Activated CD4-positive, alpha-beta T cell treated with anti-CD3 and anti-CD28 coated beads, Interleukin-2, amount 10 ng/mL, durations not matched to agents 24 days and 14 days (primary cell): ENCODE measurements at regions of chr7 and their contacts with region 1.

Region 1: GRCh38 chr7:104983578-104984539 is 30.1 kb upstream of the KMT2E start:
- DNase-seq: peak; percentile 96
- H3K4me3 Mint-ChIP-seq: peak overlapping the region; percentile 98
- H3K27ac Mint-ChIP-seq: peak overlapping the region; percentile 100
- H3K4me1 Mint-ChIP-seq: peaks cover 53% of the 10 kb centered on the region
- H3K27me3 Mint-ChIP-seq: no peaks in the 10 kb centered on the region

Region 2: GRCh38 chr7:104923010-104923421 is 60.8 kb before region 1 on chr7:
- intact Hi-C with region 1: loop called (anchors 1 kb)
- DNase-seq: peak; percentile 93
- H3K4me3 Mint-ChIP-seq: no peak overlapping the region
- H3K27ac Mint-ChIP-seq: no peak overlapping the region
- H3K4me1 Mint-ChIP-seq: peaks cover 7% of the 10 kb centered on the region
- H3K27me3 Mint-ChIP-seq: peaks cover 4% of the 10 kb centered on the region

Region 3: GRCh38 chr7:105003275-105003674 is 19.4 kb after region 1 on chr7:
- intact Hi-C with region 1: loop called (anchors 2 kb)
- DNase-seq: peak; percentile 69
- H3K4me3 Mint-ChIP-seq: peak overlapping the region; percentile 76
- H3K27ac Mint-ChIP-seq: peak overlapping the region; percentile 87
- H3K4me1 Mint-ChIP-seq: peaks cover 53% of the 10 kb centered on the region
- H3K27me3 Mint-ChIP-seq: no peaks in the 10 kb centered on the region

Region 4: GRCh38 chr7:105046414-105046813 is 62.6 kb after region 1 on chr7:
- intact Hi-C with region 1: loop called (anchors 2 kb)
- DNase-seq: no peak
- H3K4me3 Mint-ChIP-seq: no peak overlapping the region
- H3K27ac Mint-ChIP-seq: no peak overlapping the region
- H3K4me1 Mint-ChIP-seq: peaks cover 26% of the 10 kb centered on the region
- H3K27me3 Mint-ChIP-seq: no peaks in the 10 kb centered on the region

Region 5: GRCh38 chr7:105098863-105099515 is 115.1 kb after region 1 on chr7:
- intact Hi-C with region 1: loop called (anchors 5 kb)
- DNase-seq: no peak
- H3K4me3 Mint-ChIP-seq: no peak overlapping the region
- H3K27ac Mint-ChIP-seq: peak overlapping the region; percentile 48
- H3K4me1 Mint-ChIP-seq: peaks cover 39% of the 10 kb centered on the region
- H3K27me3 Mint-ChIP-seq: no peaks in the 10 kb centered on the region

Region 6: DNA sequence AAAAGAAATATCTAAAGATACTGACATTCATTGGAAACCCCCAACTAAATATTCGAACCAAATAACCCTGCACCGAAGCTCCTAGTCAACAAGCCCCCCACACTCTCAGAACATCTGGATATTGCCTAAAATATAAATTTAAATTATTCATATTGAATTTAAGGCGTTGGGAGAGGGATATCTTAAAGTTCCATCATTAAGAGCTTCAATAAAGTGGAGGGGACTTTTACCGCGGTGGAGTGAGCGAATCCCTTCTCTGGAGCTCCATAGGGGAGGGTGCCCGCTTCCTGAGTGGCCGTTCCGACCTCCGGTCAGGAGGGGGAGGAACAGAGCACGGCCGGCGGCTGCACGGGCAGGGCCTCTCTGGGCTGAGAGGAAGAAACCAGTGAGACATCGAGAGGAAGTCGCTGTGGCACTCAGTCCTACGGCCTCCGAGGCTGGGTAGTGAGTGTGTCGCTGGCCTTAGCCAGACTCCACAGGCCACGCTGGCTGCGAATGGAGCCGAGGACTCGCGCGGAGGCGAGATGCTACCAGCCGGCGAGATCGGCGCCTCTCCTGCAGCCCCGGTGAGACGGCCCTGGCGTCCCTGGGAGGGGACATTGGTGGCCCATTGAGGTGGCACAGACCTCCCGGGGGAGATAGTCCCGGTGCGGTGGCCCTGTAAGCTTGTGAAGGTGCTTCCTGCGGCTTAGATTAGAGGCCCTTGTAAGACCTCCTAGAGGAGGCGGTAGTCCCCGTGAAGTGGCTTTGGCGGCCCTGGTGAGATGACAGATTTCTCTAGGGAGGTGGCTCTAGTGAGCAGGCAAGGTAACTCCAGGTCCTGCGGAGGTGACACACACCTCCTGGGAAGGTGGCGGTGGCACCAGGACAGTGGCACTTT is 548.2 kb after region 1 on chr7 and contains the start of gene RINT1:
- intact Hi-C with region 1: loop called (anchors 5 kb)
- DNase-seq: peak; percentile 97
- H3K4me3 Mint-ChIP-seq: peak within 1 kb of the TSS; percentile 93
- H3K27ac Mint-ChIP-seq: peak within 1 kb of the TSS; percentile 93
- H3K4me1 Mint-ChIP-seq: peaks cover 25% of the 10 kb centered on the region
- H3K27me3 Mint-ChIP-seq: no peaks in the 10 kb centered on the region
- total RNA-seq, gene RINT1: 28.5 and 29.4 TPM in 2 replicates